ENCODE measurements at regions of chr19 and their contacts with region 1.

Region 1: DNA sequence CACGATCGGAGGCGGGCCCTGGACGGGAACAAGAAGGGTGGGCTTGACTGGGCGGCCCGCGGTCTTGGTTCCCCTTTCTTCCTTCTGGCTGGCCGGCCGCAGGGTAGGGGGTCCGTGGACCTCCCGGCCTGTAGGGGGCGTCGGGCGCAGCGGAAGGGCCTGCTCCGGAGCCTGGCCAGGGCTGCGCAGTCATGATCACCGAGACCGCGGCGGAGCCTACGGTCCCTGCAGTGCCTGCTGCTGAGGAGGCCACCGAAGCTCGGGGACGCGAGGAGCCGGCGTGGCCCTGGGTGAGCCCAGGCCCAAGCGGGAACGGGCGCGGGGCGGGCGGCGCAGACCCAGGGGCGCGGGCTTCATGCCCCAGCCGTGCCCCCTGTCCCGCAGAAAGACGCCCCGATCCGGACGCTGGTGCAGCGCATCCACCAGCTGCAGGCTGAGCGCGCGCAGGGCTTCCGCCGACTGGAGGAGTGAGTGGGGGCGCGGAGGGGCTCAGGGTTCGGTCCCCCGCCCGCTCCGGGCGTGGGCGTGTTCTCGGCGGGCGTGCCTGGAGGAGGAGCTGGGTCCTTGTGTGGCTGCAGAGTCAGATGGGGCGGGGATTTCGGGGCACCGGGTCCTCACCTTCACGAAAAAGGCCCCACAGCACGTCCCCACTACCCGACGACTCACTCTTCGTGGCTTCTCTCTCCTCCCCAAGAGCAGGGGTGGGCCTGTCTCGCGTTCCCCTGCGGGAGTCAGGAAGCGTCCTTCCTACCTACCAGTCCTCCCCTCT is at the start of gene REX1BD:
- DNase-seq: peak; percentile 94
- H3K4me3 ChIP-seq: peak within 1 kb of the TSS; percentile 68
- H3K27ac ChIP-seq: peak within 1 kb of the TSS; percentile 70
- H3K4me1 ChIP-seq: peaks cover 51% of the 10 kb centered on the region
- CTCF ChIP-seq: peak; percentile 92
- total RNA-seq, gene REX1BD: 122 and 126 TPM in 2 replicates

Region 2: DNA sequence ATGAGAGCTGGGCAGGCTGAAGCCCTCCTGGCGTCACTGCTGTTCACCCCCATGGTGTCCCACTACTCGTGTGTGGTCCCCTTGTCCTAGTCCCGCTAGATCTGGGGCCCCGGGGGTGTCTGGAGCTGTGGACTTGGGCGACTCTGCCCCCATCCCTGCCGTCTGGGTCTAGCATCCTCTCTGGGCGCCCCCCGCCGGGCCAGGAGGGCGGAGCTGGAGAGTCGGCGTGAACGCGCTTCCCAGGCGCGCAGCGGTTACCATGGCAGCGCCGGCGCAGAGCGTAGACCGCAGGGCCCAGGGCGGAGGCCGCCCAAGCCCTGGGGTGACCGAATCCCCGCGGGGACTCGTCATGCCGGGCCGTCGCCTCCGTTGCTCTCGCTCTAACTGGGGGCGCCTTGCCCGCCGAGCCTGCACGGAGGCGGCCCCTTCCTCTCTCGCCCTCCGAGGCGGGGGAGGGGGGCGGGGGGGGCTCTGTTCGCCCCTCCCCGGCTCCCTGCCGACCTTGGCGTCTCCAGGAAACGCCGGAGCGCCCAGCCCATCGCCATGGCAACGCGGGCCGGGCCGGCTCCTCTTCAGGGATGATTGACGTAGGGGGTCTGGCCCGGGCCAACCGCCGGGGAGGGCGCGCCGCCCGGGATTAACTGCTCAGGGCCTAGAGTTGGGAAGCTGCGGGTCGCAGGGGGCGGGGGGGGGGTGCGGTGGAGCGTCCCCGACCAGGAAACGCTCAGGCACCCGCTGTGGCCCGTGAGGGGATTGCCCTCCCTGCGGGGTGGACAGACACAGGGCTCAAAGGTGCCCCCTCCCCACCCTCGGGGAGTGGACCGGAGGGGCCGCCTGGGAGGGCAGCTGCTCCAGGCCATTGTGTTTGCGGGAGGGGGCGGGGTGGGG is 159.8 kb before region 1 on chr19:
- CTCF ChIA-PET with region 1: interaction called, 12 read pairs
- POLR2A ChIA-PET with region 1: no interaction called
- intact Hi-C with region 1: no loop called
- DNase-seq: peak; percentile 83
- H3K4me3 ChIP-seq: peak overlapping the region; percentile 41
- H3K27ac ChIP-seq: peak overlapping the region; percentile 37
- H3K4me1 ChIP-seq: peaks cover 53% of the 10 kb centered on the region
- CTCF ChIP-seq: 0 out of 2 replicates have a peak, but pooled peaks have one; percentile 29

Region 3: DNA sequence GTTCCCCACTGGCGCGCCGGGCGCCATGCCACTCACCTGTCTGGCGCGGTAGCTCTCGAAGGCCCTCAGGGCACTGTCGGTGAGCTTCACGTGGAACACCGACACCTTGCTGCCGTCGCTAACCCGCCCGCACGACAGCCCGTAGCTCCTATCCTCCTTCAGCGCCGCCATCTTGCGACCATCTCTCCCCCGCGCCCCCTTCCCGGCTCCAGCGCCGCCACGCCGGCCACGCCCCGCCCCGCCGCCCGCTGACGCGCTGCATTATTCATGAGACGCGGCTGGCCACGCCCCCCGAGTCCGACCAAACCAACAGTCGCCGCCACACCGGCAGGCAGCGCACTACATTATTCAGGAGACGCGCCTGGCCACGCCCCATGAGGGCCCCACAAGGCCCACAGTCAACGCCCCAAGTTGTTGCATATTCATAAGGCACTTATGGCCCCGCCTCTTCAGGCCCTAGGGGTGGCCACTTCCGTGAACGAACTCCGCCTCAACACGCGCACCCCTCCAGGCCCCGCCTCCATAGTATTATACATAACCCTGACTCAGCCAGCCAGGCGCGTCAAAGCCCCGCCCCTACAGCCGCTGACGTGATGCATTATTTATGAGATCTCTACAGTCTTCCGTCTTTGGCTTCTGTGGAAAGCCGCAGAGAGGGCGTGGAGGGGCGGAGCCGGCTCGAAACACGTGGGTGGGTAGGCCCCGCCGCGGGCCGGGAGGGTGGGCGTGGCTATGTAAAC is 66.7 kb before region 1 on chr19 and contains the start of gene ELL:
- CTCF ChIA-PET with region 1: interaction called, 4 read pairs
- POLR2A ChIA-PET with region 1: no interaction called
- intact Hi-C with region 1: loop called (anchors 1 kb)
- DNase-seq: peak; percentile 100
- H3K4me3 ChIP-seq: peak within 1 kb of the TSS; percentile 92
- H3K27ac ChIP-seq: peak within 1 kb of the TSS; percentile 52
- H3K4me1 ChIP-seq: peaks cover 17% of the 10 kb centered on the region
- CTCF ChIP-seq: no peak
- total RNA-seq, gene ELL: 14.4 and 18.7 TPM in 2 replicates

Region 4: GRCh38 chr19:18557474-18558201 is 31.2 kb before region 1 on chr19 and contains the start of gene KXD1:
- CTCF ChIA-PET with region 1: interaction called, 5 read pairs
- POLR2A ChIA-PET with region 1: interaction called, 13 read pairs
- intact Hi-C with region 1: no loop called
- DNase-seq: peak; percentile 100
- H3K4me3 ChIP-seq: peak within 1 kb of the TSS; percentile 95
- H3K27ac ChIP-seq: peak within 1 kb of the TSS; percentile 65
- H3K4me1 ChIP-seq: peaks cover 29% of the 10 kb centered on the region
- CTCF ChIP-seq: no peak
- total RNA-seq, gene KXD1: 96.0 and 99.8 TPM in 2 replicates

Region 5: GRCh38 chr19:18620916-18621315 is 32.1 kb after region 1 on chr19:
- CTCF ChIA-PET with region 1: no interaction called
- POLR2A ChIA-PET with region 1: interaction called, 10 read pairs
- intact Hi-C with region 1: no loop called
- DNase-seq: no peak
- H3K4me3 ChIP-seq: no peak overlapping the region
- H3K27ac ChIP-seq: peak overlapping the region; percentile 52
- H3K4me1 ChIP-seq: peaks cover 26% of the 10 kb centered on the region
- CTCF ChIP-seq: no peak

Region 6: DNA sequence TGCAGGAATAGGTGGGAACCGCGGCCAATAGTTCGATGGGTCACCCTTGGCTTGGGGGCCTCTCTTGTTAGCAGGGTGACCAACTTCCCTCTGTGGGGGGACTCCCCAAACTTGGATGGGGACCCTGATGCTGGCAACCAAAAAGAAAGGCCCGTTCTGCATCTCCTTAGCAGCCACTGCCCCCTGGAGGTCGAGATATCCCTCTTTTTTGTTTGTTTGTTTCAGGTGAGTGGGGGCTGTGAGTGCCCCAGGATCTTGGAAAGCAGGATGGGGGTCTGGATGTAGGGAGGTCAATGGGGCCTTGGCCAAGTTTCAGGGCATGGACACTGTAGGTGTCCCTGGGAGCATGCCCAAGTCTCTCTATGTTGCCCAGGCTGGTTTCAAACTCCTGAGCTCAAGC is 87.0 kb after region 1 on chr19:
- CTCF ChIA-PET with region 1: interaction called, 3 read pairs
- POLR2A ChIA-PET with region 1: no interaction called
- intact Hi-C with region 1: loop called (anchors 2 kb)
- DNase-seq: peak; percentile 48
- H3K4me3 ChIP-seq: no peak overlapping the region
- H3K27ac ChIP-seq: no peak overlapping the region
- H3K4me1 ChIP-seq: no peaks in the 10 kb centered on the region
- CTCF ChIP-seq: peak; percentile 81

Measured in OCI-LY7 (cell line).